ENCODE measurements at regions of chr9 and their contacts with region 1.

Region 1: DNA sequence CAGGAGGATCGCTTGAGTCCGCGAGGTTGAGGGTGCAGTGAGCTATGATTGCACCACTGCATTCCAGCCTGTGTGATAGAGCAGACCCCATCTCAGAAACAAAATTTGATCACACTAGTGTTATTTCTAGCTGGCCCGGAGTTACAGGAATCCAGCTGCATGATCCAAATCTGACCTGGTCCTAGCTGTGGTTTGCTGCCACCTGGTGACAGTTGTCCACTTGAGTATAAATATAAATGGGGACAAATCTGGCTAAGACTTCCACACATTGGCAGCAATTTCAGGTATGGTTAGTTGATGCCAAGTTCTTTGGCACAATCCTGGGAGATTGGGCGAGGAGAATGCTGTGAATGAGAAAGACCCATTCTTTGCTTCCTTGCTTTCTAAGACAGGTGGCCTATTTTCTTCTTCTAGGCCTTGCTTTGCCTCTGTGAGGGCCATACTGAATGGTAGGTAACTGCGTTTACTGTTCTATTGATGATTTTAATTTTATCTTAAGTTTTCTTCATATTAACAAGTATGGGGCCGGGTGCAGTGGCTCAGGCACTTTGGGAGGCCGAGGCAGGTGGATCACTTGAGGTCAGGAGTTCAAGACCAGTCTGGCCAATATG is 35.4 kb downstream of the UBE2R2 start:
- DNase-seq: no peak
- H3K4me3 ChIP-seq: no peak overlapping the region
- H3K27ac ChIP-seq: no peak overlapping the region
- H3K27me3 ChIP-seq: no peaks in the 10 kb centered on the region
- CTCF ChIP-seq: no peak

Region 2: DNA sequence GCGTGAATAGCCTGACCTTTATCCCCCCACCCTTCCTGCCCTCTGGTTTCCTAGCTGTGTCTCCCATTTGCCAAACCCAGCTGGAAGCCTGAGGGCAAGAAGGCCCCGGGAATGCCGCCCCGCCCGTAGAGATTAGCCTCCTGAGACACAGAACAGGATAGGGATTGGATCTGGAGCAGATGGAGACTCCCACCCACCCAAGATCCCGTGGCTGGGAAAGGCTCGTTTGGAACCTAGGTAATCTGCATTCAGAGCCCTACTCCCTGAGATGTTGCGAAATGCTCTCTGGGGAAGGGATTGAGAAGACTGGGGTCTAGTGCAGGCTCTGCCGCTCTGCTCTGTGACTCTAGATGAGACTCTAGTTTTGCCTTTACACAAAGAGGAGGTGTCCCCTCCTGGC is 415.9 kb before region 1 on chr9:
- CTCF ChIA-PET with region 1: no interaction called
- POLR2A ChIA-PET with region 1: no interaction called
- DNase-seq: no peak
- H3K4me3 ChIP-seq: no peak overlapping the region
- H3K27ac ChIP-seq: no peak overlapping the region
- H3K27me3 ChIP-seq: peaks cover 19% of the 10 kb centered on the region
- CTCF ChIP-seq: no peak

Region 3: DNA sequence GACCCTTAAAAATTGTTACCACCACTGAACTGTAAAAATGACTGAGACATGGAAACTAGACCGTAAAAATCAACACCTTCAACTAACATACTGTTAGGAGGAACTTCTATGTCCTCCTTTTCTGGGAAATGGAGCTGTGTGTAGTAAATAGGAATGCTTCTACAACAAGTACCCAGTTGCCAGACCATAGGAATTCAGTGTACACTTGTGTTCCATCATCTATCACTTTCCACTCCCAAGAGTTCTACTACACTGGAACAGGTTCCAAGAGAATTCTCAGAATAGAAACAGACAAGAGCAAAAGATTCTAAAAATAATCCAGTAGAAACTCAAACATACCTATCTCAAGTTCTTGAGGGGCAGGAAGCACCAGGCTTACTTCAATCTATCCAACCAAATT is 172.7 kb after region 1 on chr9:
- CTCF ChIA-PET with region 1: interaction called, 10 read pairs
- POLR2A ChIA-PET with region 1: no interaction called
- DNase-seq: no peak
- H3K4me3 ChIP-seq: no peak overlapping the region
- H3K27ac ChIP-seq: no peak overlapping the region
- H3K27me3 ChIP-seq: no peaks in the 10 kb centered on the region
- CTCF ChIP-seq: no peak

Measured in AG04450 (cell line).